ENCODE measurements at regions of chr19 and their contacts with region 1.

Region 1: GRCh38 chr19:48899781-48900476 is at the start of gene NUCB1:
- DNase-seq: peak; percentile 98
- H3K4me3 ChIP-seq: peak within 1 kb of the TSS; percentile 85
- H3K27ac ChIP-seq: peak within 1 kb of the TSS; percentile 70 to 90
- H3K4me1 ChIP-seq: peaks cover 0 to 9% of the 10 kb centered on the region in 2 experiments; a peak in 1 of 4 replicates
- H3K27me3 ChIP-seq: no peaks in the 10 kb centered on the region
- CTCF ChIP-seq: peak; percentile 32; the same call in 1 of the 2 replicates
- EP300 ChIP-seq: peak in 1 of 2 experiments; percentile 72; a peak in 1 of 4 replicates
- RAD21 ChIP-seq: 0 out of 2 replicates have a peak, but pooled peaks have one; percentile 12
- polyA plus RNA-seq, gene NUCB1: 259 and 397 TPM in 2 replicates

Region 2: DNA sequence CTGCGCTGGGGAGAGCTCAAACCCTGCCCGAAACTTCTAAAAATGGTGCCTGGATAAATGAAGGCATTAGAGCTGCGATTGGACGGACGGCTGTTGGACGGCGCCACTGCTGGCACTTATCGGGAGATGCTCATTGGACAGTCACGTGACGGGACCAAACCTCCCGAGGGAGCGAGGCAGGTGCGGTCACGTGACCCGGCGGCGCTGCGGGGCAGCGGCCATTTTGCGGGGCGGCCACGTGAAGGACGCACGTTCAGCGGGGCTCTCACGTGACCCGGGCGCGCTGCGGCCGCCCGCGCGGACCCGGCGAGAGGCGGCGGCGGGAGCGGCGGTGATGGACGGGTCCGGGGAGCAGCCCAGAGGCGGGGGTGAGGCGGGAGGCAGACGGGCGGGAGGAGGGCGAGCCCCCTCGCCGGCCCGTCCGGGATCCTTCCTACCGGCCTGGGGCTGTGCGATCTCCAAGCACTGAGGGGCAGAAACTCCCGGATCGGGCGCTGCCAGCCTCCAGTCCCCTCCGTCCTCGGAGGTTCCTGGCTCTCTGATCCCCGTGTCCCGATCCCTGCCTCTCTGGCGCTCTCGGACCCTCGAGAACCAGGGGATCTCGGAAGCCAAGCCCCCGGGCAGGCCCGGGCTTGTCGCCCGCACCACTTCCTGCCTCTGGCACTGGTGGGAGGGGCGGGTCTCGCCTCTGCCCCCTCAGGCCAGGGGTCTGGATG is 54.8 kb after region 1 on chr19 and contains the start of gene BAX:
- CTCF ChIA-PET with region 1: no interaction called
- POLR2A ChIA-PET with region 1: interaction called, 11 read pairs
- DNase-seq: peak; percentile 99
- H3K4me3 ChIP-seq: peak within 1 kb of the TSS; percentile 76 to 80
- H3K27ac ChIP-seq: peak within 1 kb of the TSS; percentile 83 to 86
- H3K4me1 ChIP-seq: peaks cover 8 to 10% of the 10 kb centered on the region in 2 experiments; a peak in 2 of 4 replicates
- H3K27me3 ChIP-seq: no peaks in the 10 kb centered on the region
- CTCF ChIP-seq: no peak
- EP300 ChIP-seq: peak; percentile 13 to 20; a peak in 1 of 4 replicates
- RAD21 ChIP-seq: 0 out of 2 replicates have a peak, but pooled peaks have one; percentile 1
- polyA plus RNA-seq, gene BAX: 278 and 640 TPM in 2 replicates